BJ (cell line): ENCODE measurements at regions of chr9 and their contacts with region 1.

Region 1: GRCh38 chr9:21395778-21396717 is 10.8 kb upstream of the IFNA2 start:
- DNase-seq: no peak
- H3K4me3 ChIP-seq: peak overlapping the region; percentile 35
- H3K27me3 ChIP-seq: peaks cover 12% of the 10 kb centered on the region
- CTCF ChIP-seq: peak; percentile 93

Region 2: GRCh38 chr9:21078717-21079116 is 317.3 kb before region 1 on chr9:
- CTCF ChIA-PET with region 1: no interaction called
- POLR2A ChIA-PET with region 1: no interaction called
- DNase-seq: no peak
- H3K4me3 ChIP-seq: no peak overlapping the region
- H3K27me3 ChIP-seq: no peaks in the 10 kb centered on the region; the same call in 1 of the 2 replicates
- CTCF ChIP-seq: no peak

Region 3: DNA sequence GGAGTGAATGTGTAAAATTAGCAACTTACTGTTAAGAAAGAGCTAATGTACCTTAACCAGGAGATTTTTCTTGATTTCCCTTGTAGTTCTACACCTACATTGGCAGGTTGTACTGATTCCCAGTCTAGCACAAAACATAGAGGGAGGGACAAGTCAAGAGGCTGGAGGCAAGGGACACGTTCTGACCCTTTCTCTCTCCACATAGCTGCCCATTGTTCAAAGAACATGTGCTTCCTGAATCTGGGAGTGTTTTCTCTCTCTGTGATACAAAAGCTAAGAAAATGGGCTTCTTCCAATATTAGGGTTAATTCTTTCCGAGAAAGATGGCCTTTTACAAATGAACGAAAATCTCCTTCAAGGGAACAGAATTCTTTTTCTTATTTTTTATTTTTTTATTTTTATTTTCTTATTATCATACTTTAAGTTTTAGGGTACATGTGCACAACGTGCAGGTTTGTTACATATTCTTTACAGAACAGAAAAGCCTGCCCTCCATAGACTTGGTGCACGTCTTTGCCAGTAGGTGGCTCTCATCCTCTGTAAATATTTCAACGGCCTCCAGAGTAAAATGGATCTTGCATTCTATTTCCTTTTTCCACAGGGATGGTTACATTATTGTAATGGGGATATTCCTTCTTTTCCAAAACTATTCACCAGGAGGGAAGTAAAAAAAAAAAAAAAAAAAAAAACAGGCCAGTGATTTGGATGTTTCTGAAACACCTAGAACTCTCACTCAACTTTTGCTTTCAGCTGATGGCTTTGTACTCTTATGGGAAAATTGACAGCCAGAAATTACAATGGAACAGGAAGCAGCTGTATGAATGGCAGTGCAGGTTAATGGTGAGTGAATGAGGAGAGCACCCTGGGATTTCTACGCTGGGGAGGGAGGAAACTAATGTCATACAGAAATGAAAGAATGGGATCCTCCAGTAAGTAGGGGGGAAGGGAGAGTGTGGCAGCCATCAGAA is 77.8 kb before region 1 on chr9:
- CTCF ChIA-PET with region 1: interaction called, 67 read pairs
- POLR2A ChIA-PET with region 1: no interaction called
- DNase-seq: no peak
- H3K4me3 ChIP-seq: no peak overlapping the region
- H3K27me3 ChIP-seq: no peaks in the 10 kb centered on the region
- CTCF ChIP-seq: peak; percentile 69

Region 4: DNA sequence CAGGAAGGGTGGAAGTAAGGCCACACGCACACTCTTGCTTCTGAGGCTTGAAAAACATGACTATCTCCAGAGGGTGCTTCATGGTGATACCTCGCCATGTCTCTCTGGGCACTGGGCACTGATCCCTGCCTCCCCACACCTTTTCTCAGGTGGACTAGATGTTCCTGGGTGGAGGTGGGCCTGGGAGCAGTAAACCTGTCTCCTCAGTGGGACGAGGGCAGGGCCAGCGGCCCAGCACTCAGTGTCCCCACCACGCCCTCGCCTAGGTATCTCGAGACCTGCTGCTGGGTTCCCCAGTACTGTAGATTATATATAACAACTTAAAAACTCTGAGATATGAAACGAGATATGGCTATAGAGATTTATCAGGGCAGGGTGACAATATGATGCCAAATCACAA is 33.8 kb before region 1 on chr9:
- CTCF ChIA-PET with region 1: interaction called, 10 read pairs
- POLR2A ChIA-PET with region 1: no interaction called
- DNase-seq: no peak
- H3K4me3 ChIP-seq: no peak overlapping the region
- H3K27me3 ChIP-seq: 0 out of 2 replicates have a peak, but pooled peaks cover 2% of the 10 kb centered on the region
- CTCF ChIP-seq: no peak

Region 5: DNA sequence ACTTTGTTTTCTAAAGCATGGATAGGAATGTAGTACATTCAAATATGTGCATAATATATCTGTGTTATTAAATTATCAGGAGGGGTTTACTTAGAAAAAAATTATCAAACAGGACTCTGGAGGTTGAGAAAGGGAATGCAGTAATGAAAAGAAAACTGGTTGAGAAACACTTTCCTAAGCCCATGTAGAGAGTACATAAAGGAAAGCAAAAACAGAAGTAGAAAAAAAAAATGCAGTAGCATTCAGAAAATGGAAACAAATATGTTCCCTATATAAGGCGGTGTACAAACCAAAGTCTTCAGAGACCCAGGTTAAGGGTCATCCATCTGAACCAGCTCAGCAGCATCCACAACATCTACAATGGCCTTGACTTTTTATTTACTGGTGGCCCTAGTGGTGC is 12.8 kb after region 1 on chr9 and contains the start of gene IFNA8:
- CTCF ChIA-PET with region 1: interaction called, 12 read pairs
- POLR2A ChIA-PET with region 1: no interaction called
- DNase-seq: no peak
- H3K4me3 ChIP-seq: no peak within 1 kb of the TSS
- H3K27me3 ChIP-seq: peaks cover 11% of the 10 kb centered on the region
- CTCF ChIP-seq: no peak
- polyA plus RNA-seq, gene IFNA8: not detected in 2 replicates

Region 6: GRCh38 chr9:21434202-21435014 is 38.4 kb after region 1 on chr9:
- CTCF ChIA-PET with region 1: interaction called, 10 read pairs
- POLR2A ChIA-PET with region 1: no interaction called
- DNase-seq: no peak
- H3K4me3 ChIP-seq: no peak overlapping the region
- H3K27me3 ChIP-seq: peaks cover 5% of the 10 kb centered on the region; the same call in 1 of the 2 replicates
- CTCF ChIP-seq: peak; percentile 60

Region 7: GRCh38 chr9:21624675-21625644 is 228.9 kb after region 1 on chr9:
- CTCF ChIA-PET with region 1: no interaction called
- POLR2A ChIA-PET with region 1: no interaction called
- DNase-seq: no peak
- H3K4me3 ChIP-seq: no peak overlapping the region
- H3K27me3 ChIP-seq: no peaks in the 10 kb centered on the region
- CTCF ChIP-seq: no peak